Heart right ventricle (tissue), 16 donors: ENCODE measurements at regions of chr9 and their contacts with region 1.

Region 1: GRCh38 chr9:116087246-116087645 is 66.3 kb upstream of the PAPPA start:
- DNase-seq: peak; percentile 8 to 49
- ATAC-seq: peak; percentile 90 to 96 (median 94)
- H3K4me3 ChIP-seq: no peak overlapping the region
- H3K27ac ChIP-seq: peak overlapping the region in 8 of 10 donors; percentile 37 to 52 (median 46)
- H3K4me1 ChIP-seq: peaks cover 0 to 17% (median 10%) of the 10 kb centered on the region in 9 donors
- H3K27me3 ChIP-seq: no peaks in the 10 kb centered on the region
- CTCF ChIP-seq: no peak

Region 2: DNA sequence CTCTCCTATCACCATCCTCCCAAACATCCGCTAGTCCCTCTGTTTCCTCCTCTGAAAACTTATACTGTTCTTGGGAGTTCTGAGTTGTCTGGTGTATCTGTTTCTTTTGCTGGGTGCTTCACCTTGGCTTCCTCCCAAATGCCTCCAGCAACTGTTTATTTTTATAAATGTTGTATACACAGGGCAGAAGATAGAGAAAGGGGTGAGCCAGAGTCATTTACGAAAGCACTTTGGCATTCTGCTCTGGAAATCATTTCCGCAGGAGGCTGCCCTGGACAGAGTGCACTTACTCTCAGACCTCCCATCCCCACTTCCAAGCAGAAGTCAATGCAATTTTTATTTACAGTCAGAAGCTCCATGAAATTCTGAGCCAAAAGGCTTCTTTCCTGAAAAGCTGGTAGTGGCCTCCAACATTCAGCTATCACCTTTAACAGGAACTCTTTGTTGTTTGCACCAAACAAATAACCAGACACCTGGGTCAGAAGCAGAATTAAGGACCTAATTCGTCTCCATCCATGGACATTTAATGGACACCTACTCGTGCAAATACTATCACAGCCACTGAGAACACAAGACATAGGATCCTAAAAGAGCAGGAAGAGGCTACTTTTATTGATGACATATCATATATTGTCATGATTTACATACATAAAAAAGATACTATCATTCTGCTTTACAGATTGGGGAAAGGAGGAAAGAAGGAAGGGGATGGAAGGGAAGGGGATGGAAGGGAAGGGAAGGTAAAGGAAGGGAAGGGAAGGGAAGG is 163.2 kb before region 1 on chr9:
- intact Hi-C with region 1: loop called in 1 of 10 experiments (anchors 10 kb)
- DNase-seq: peak in 1 of 2 donors; percentile 42
- ATAC-seq: peak; percentile 65 to 99 (median 96)
- H3K4me3 ChIP-seq: no peak overlapping the region
- H3K27ac ChIP-seq: peak overlapping the region in 6 of 10 donors; percentile 4 to 61 (median 54)
- H3K4me1 ChIP-seq: peaks cover 0 to 15% (median 5%) of the 10 kb centered on the region in 9 donors
- H3K27me3 ChIP-seq: no peaks in the 10 kb centered on the region
- CTCF ChIP-seq: no peak

Region 3: DNA sequence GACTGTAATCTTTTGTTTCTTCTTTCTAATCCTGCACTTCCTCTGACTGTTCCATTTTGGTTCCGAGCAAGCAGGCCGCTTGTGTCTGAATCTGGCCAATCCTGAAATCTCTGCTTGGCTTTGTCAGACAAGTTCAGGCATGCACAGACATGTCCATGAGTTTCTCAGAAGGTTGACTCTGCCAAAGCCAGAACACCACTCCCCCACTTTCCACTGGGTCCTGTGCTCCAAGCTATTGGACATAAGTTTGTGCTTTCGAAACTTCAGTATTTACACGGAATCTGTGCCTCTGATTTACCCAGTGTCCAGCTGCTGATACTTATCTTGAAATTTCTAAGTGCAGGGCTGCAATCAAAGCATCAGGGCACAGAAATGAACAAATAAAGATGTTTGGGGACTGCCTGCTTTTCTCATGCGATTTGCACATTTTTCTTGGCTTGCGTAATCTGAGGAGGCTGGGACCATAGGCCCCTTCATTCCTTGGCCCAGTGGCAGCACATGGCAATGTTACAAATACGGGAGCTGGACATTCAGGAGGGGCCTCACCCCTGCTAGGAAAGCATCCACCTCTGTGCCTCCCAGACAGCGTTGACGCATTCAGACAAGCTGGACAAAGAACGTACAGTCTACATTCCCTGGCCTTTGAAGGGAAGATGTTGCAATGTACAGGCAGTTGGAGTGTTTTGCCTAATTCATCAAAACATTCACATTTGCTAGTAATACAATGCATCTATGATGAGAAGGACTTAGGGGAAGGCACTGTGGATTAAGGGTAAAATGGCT is 142.9 kb before region 1 on chr9:
- intact Hi-C with region 1: loop called in 3 of 10 experiments (anchors 5 to 10 kb)
- DNase-seq: peak; percentile 59 to 62
- ATAC-seq: peak; percentile 85 to 98 (median 94)
- H3K4me3 ChIP-seq: no peak overlapping the region
- H3K27ac ChIP-seq: peak overlapping the region; percentile 66 to 87 (median 79)
- H3K4me1 ChIP-seq: peaks cover 5 to 39% (median 19%) of the 10 kb centered on the region in 9 donors
- H3K27me3 ChIP-seq: no peaks in the 10 kb centered on the region
- CTCF ChIP-seq: no peak

Region 4: DNA sequence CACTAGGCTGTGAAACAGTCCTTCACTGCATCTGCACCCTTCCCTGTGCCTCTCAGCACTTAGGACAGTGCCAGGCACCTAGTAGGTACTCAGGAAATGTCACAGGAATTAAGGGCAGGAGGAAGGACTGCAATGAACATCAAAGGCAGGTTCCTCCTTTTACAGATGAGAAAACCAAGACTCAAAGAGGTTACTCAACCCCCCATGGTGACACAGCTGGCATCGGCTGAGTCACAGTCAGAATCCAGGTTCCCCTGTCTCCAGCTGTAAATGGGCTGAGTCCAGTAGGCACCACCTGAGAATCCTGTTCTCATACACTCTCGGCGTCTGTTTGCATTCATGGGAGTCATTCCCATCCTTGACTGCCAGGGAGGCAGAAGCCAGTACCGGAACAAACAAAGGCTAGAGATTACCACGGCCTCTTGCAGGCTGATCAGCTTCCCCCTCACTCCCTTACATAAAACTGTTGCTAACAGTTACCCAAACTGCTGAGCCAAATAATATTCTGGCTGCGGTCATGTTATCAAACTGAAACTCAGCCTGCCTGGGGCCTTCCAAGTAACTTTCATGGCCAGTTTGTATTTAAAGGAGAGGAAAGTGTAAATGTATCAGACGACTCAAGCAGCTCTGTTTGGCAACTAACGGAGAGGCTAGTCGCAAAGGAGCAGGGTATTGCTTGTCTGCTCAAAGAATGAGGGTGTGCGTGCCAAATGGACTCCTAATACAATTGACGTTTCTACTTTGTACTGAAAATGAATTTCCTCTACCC is 268.1 kb after region 1 on chr9:
- intact Hi-C with region 1: no loop called
- DNase-seq: peak in 1 of 2 donors; percentile 48
- ATAC-seq: peak; percentile 78 to 94 (median 86)
- H3K4me3 ChIP-seq: no peak overlapping the region
- H3K27ac ChIP-seq: peak overlapping the region in 9 of 10 donors; percentile 12 to 76 (median 51)
- H3K4me1 ChIP-seq: peaks cover 3 to 28% (median 12%) of the 10 kb centered on the region in 9 donors
- H3K27me3 ChIP-seq: no peaks in the 10 kb centered on the region
- CTCF ChIP-seq: no peak